ENCODE measurements at regions of chr21 and their contacts with region 1.

Region 1: GRCh38 chr21:30932686-30933085 is 51.3 kb upstream of the KRTAP11-1 start:
- DNase-seq: no peak
- ATAC-seq: no peak

Region 2: GRCh38 chr21:30964283-30964682 is 31.6 kb after region 1 on chr21:
- intact Hi-C with region 1: loop called (anchors 2 kb)
- DNase-seq: no peak
- ATAC-seq: no peak